Breast epithelium (tissue), 4 donors: ENCODE measurements at regions of chr2 and their contacts with region 1.

Region 1: GRCh38 chr2:8976442-8977259 is 26.8 kb downstream of the MBOAT2 start:
- DNase-seq: no peak
- H3K4me3 ChIP-seq: no peak overlapping the region
- H3K27ac ChIP-seq: no peak overlapping the region
- H3K4me1 ChIP-seq: no peaks in the 10 kb centered on the region
- H3K27me3 ChIP-seq: no peaks in the 10 kb centered on the region
- CTCF ChIP-seq: no peak
- POLR2A ChIP-seq: no peak

Region 2: GRCh38 chr2:8574144-8575037 is 402.3 kb before region 1 on chr2:
- intact Hi-C with region 1: no loop called
- DNase-seq: no peak
- H3K4me3 ChIP-seq: peak overlapping the region in 1 of 3 donors; percentile 19
- H3K27ac ChIP-seq: peak overlapping the region; percentile 70 to 81
- H3K4me1 ChIP-seq: no peaks in the 10 kb centered on the region
- H3K27me3 ChIP-seq: no peaks in the 10 kb centered on the region
- CTCF ChIP-seq: no peak
- POLR2A ChIP-seq: no peak

Region 3: DNA sequence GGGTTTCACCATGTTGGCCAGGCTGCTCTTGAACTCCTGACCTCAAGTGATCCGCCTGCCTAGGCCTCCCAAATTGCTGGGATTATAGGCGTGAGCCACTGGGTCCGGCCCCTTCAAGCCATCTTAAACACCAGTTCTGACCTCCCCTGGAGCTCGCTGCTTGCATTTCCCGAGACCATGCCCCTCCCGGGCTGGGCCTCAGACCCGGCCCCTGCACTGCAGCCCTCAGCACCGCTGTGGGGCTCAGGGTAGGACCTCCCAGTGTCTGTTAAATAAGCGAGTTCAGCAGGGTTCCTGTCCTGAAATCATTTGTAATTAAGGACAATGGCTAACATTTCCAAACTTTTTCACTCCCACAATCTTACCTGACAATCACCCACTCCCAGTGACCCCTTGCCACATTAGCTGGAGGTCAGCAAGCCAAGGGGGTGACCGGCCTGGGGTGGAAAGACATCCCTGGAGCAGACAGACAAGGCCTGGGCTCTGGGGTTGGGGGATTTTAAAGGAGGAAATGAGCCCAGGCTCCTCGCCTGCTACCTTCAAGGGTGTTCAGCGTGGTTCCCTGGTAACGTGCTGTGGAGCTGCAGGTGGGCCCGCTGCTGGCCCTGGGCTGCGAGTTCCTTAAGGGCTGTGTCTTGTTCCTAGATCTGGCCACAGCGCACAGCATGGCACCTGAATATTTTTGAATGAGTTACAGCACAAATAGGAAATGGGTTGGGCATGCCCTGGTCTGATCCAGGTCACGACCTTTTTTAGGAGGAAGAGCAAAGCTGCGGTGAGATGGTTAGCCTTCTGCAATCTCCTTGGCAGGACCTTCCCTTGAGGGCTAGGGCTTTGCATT is 1088.5 kb after region 1 on chr2:
- intact Hi-C with region 1: loop called (anchors 5 kb)
- DNase-seq: no peak
- H3K4me3 ChIP-seq: no peak overlapping the region
- H3K27ac ChIP-seq: no peak overlapping the region
- H3K4me1 ChIP-seq: no peaks in the 10 kb centered on the region
- H3K27me3 ChIP-seq: no peaks in the 10 kb centered on the region
- CTCF ChIP-seq: no peak
- POLR2A ChIP-seq: no peak